ENCODE measurements at regions of chr3 and their contacts with region 1.

Region 1: GRCh38 chr3:59857589-59858346 is 807.9 kb upstream of the CFAP20DC start:
- DNase-seq: peak; percentile 90
- ATAC-seq: peak; percentile 99
- H3K4me3 Mint-ChIP-seq: no peak overlapping the region
- H3K27ac Mint-ChIP-seq: no peak overlapping the region
- H3K4me1 Mint-ChIP-seq: peaks cover 11% of the 10 kb centered on the region
- H3K27me3 Mint-ChIP-seq: no peaks in the 10 kb centered on the region

Region 2: GRCh38 chr3:59313365-59313764 is 544.4 kb before region 1 on chr3:
- CTCF ChIA-PET with region 1: interaction called, 10 read pairs
- POLR2A ChIA-PET with region 1: no interaction called
- DNase-seq: peak; percentile 46
- ATAC-seq: no peak
- H3K4me3 Mint-ChIP-seq: no peak overlapping the region
- H3K27ac Mint-ChIP-seq: no peak overlapping the region
- H3K4me1 Mint-ChIP-seq: no peaks in the 10 kb centered on the region
- H3K27me3 Mint-ChIP-seq: no peaks in the 10 kb centered on the region

Region 3: DNA sequence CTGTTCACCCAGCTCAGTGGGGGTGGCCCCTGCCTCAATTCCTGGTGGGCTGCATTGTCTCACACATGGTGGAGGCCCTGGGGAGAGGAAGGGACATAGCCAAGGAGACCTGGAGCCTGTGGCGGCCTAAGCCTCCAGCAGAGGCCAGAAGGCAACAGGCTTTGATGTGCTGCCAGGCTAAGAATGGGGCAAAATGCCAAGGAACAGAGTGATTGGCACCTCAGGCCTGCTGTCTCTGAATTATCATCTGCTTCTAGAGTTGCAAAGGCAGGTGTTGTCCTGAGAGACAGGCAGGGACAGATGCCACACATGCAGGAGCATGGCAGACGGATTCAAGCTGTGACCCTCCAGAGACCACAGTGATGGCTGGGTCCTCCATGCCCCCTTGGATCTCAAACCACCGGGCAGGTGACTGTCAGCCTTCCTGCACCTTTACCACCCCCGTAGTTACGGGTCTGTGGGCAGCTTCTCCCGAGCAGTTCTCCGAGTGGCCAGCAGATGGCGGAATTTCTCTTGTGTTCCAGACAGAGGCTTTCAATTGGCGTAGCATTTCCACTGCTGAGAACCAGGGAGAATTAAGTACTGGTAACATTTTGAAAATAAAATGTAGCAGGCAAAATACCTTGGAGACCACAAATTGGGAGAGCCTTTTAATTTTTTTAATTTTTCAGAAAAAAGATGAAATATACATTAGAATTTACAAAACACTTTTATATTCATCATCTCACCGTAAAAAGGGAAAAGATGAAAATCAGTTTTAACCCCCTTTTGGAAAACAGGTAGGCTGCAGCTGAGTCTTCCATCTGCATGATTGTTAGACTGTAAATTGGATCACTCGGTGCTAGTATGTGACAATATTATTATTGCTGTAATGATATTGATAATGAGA is 282.4 kb before region 1 on chr3:
- CTCF ChIA-PET with region 1: interaction called, 44 read pairs
- POLR2A ChIA-PET with region 1: no interaction called
- DNase-seq: peak; percentile 90
- ATAC-seq: peak; percentile 74
- H3K4me3 Mint-ChIP-seq: no peak overlapping the region
- H3K27ac Mint-ChIP-seq: no peak overlapping the region
- H3K4me1 Mint-ChIP-seq: peaks cover 12% of the 10 kb centered on the region
- H3K27me3 Mint-ChIP-seq: no peaks in the 10 kb centered on the region

Region 4: DNA sequence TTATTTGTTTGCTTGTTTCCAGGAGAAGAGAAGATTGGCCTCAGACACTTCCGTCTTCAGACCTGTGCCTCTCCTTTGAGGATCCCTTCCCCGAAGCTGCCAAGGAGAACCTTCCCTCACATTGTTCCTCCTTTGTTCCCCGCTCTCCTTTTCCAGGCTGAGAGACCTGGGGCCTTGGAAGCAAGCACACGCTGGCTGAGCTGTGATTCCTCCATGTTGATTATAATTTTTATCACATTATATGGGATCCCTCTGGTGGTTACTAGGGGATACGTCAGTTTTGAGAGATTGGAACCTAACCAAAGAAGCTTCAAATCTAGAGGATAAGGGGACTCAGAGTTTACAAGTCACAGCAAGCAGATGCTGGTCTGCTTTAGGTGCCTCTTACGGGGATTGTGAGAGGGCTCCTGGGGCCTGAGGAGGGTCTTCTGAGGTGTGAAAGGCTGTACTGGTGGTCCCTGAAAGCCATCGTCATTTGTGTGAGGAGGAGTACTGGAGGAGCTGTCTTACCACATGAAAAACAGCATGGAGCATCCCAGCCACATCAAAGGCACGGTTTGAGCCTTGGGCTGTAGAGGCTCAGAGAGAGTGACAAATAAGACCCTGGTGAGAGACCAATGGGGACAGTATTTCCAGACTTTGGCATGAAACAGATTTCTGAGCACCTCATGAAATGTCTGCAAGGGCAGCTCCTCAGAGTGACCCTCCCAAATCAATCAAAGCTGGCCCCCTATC is 47.9 kb before region 1 on chr3:
- CTCF ChIA-PET with region 1: interaction called, 11 read pairs
- POLR2A ChIA-PET with region 1: no interaction called
- DNase-seq: no peak
- ATAC-seq: peak; percentile 19
- H3K4me3 Mint-ChIP-seq: no peak overlapping the region
- H3K27ac Mint-ChIP-seq: peak overlapping the region; percentile 22
- H3K4me1 Mint-ChIP-seq: peaks cover 10% of the 10 kb centered on the region
- H3K27me3 Mint-ChIP-seq: no peaks in the 10 kb centered on the region

Region 5: DNA sequence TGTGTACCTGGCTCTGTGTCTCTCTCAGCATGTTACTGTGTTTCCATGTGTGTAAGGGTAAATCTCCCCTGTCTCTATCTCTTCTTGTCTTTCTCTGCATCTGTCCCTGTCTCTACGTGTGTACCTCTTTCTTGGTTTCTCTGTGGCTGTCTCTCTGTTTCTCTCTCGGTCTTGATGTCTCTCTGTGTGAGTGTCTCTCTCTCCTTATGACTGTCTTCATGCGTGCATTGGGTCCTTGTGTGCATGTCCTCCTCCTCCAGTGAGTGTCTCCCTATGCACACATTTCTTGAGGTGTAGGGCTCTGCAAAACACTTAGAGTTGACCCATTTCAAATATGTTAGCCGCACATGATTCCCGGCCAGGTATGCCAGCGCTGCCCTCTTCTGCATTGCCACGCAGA is 95.3 kb after region 1 on chr3:
- CTCF ChIA-PET with region 1: no interaction called
- POLR2A ChIA-PET with region 1: no interaction called
- DNase-seq: no peak
- ATAC-seq: no peak
- H3K4me3 Mint-ChIP-seq: no peak overlapping the region
- H3K27ac Mint-ChIP-seq: no peak overlapping the region
- H3K4me1 Mint-ChIP-seq: peaks cover 5% of the 10 kb centered on the region
- H3K27me3 Mint-ChIP-seq: no peaks in the 10 kb centered on the region

Region 6: DNA sequence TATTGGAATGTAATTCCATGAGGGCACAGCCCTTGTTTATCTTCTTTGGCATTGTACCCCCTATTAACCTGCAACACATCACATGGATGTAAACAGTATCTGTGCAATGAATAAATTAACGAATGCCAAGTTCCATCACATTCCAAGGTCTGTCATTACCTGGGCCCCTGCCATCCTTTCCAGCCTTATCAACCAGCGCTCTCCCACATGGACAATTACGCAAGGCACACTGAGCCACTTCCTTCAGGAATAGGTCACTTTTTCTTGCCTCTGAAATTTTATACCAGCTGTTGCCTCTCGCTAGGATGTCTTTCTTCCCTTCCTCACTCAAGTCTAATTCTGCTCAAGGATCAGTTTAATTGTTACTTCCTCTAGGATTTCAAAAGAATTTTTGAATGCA is 243.9 kb after region 1 on chr3:
- CTCF ChIA-PET with region 1: no interaction called
- POLR2A ChIA-PET with region 1: no interaction called
- DNase-seq: no peak
- ATAC-seq: no peak
- H3K4me3 Mint-ChIP-seq: no peak overlapping the region
- H3K27ac Mint-ChIP-seq: no peak overlapping the region
- H3K4me1 Mint-ChIP-seq: peaks cover 14% of the 10 kb centered on the region
- H3K27me3 Mint-ChIP-seq: no peaks in the 10 kb centered on the region